ENCODE measurements at regions of chr7 and their contacts with region 1.

Region 1: DNA sequence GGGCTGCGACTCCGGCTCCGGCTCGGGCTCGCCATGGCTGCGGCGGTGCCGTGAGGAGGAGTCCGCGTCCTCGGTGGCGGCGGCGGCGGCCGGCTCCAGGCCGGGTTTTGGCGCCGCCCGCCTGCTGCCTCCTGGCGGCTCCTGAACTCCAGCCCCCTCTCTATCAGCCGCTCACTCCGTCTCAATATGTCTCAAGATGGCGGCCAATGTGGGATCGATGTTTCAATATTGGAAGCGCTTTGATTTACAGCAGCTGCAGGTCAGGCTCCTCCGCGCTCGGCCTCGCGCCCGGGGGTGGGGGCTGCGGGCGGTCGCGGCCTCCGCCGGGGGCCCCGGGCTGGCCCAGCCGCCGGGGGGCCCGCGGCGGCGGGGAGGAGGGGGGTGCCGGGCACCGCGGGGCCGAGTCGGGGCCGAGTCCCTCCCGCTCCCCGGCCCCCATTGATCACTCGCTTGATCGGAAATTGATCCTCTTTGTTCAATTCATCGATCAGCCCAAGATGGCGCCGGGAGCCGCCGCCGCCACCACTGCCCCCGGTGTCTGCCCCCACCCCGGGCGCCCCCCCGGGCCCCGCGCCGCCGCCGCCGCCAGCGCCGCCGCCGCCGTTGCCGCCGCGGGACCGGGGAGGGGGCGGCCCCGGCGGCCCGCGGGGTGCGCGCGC is 1.5 kb upstream of the CUX1 start:
- DNase-seq: peak; percentile 82 to 89 (median 85)
- ATAC-seq: peak; percentile 56
- H3K4me3 ChIP-seq: peak overlapping the region; percentile 68
- H3K27ac ChIP-seq: peak overlapping the region; percentile 76
- H3K4me1 ChIP-seq: peaks cover 27 to 34% of the 10 kb centered on the region in 2 experiments
- H3K27me3 ChIP-seq: no peaks in the 10 kb centered on the region
- CTCF ChIP-seq: peak in 2 of 3 experiments; percentile 31 to 35; a peak in 2 of 6 replicates
- EP300 ChIP-seq: no peak
- POLR2A ChIP-seq: no peak
- RAD21 ChIP-seq: no peak

Region 2: DNA sequence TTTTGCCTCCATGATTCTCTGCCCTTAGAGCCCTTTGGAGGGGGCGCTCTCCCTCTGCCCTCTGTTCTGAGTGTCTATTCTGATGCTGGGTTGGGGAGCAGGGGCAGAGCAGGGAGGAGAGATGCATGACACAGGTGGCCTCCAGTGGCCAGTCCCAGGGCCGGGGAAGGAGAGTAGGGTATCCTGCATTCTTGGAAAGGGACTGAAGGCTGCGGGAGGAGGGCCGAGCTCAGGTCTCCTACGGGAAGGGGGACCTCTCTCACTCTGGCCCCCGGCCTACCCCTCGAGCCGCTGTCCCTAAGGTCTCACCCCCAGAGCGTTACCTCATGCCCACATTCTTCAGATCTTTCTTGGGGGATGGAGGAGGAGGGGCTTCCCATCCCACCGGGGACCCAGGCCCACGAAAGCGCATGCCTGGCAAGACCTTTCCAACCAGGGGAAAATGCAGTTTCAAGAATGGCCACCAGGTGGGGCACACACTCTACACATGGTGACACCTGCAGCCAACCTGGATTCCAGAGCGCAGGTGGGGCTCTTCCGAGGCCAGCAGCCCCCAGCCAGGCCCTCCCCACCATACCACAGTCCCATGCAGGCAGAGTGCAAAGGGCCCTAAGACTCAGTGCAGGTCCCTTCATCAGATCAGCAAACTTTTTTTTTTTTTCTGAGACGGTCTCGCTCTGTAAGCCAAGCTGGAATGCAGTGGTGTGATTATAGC is 273.3 kb before region 1 on chr7:
- CTCF ChIA-PET with region 1: interaction called, 3 read pairs
- POLR2A ChIA-PET with region 1: no interaction called
- in situ Hi-C with region 1: no loop called
- intact Hi-C with region 1: loop called (anchors 5 kb)
- DNase-seq: peak; percentile 68 to 81 (median 76)
- ATAC-seq: peak; percentile 76
- H3K4me3 ChIP-seq: no peak overlapping the region
- H3K27ac ChIP-seq: no peak overlapping the region
- H3K4me1 ChIP-seq: peaks cover 0 to 26% of the 10 kb centered on the region in 2 experiments; a peak in 1 of 5 replicates
- H3K27me3 ChIP-seq: peaks cover 0 to 5% of the 10 kb centered on the region in 2 experiments; a peak in 2 of 5 replicates
- CTCF ChIP-seq: peak; percentile 88 to 93 (median 91)
- EP300 ChIP-seq: no peak
- POLR2A ChIP-seq: no peak
- RAD21 ChIP-seq: peak; percentile 89 to 93

Region 3: DNA sequence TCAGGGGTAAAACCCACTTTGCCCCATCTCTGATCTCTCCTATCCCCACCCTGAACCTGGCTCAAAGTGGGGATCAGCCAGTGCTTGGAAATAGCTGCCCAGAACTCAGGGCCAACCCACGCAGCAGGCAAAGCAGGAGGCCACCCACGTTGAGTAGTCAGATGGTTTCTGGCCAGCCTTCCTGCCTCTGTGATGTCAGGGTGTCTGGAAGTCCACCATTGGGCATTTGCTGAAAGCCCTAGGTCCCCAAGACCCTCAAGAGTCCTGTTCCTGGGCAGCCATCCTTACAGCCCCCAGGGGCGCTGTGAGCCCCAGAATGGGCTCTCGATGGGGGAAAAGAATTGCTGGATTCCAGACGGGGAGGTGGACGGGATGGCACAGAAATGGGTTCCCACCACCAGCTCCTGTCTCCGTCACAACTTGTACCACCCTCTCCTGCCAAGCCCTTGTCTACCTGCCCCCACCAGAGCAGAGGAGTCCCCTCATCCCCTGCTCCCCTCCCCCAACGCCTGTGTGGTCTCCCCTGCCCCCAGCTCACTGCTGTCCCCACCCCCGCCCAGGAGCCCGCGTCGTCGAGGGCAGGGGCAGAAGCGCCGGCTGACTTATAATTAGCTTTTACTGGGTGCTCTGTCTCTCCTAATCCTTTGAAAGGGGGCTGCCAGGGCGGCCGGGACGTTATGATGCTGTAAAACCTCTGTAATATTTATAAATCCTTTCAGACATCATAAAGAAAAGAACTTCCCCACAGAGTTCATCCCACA is 190.8 kb before region 1 on chr7:
- CTCF ChIA-PET with region 1: no interaction called
- POLR2A ChIA-PET with region 1: no interaction called
- in situ Hi-C with region 1: no loop called
- intact Hi-C with region 1: no loop called
- DNase-seq: peak in 1 of 4 experiments; percentile 12
- ATAC-seq: peak; percentile 26
- H3K4me3 ChIP-seq: no peak overlapping the region
- H3K27ac ChIP-seq: no peak overlapping the region
- H3K4me1 ChIP-seq: peaks cover 0 to 11% of the 10 kb centered on the region in 2 experiments; a peak in 1 of 5 replicates
- H3K27me3 ChIP-seq: peaks cover 24 to 64% of the 10 kb centered on the region in 2 experiments
- CTCF ChIP-seq: peak; percentile 25 to 47 (median 26); a peak in 2 of 6 replicates
- EP300 ChIP-seq: no peak
- POLR2A ChIP-seq: no peak
- RAD21 ChIP-seq: peak in 1 of 2 experiments; percentile 8; a peak in 1 of 4 replicates

Region 4: GRCh38 chr7:101677797-101678479 is 138.0 kb before region 1 on chr7:
- CTCF ChIA-PET with region 1: no interaction called
- POLR2A ChIA-PET with region 1: no interaction called
- in situ Hi-C with region 1: no loop called
- intact Hi-C with region 1: no loop called
- DNase-seq: peak in 1 of 4 experiments; percentile 41
- ATAC-seq: peak; percentile 20; the same call in 1 of the 3 replicates
- H3K4me3 ChIP-seq: no peak overlapping the region; the same call in 1 of the 2 replicates
- H3K27ac ChIP-seq: no peak overlapping the region
- H3K4me1 ChIP-seq: peaks cover 0 to 11% of the 10 kb centered on the region in 2 experiments; a peak in 1 of 5 replicates
- H3K27me3 ChIP-seq: peaks cover 0 to 15% of the 10 kb centered on the region in 2 experiments; a peak in 2 of 5 replicates
- CTCF ChIP-seq: no peak
- EP300 ChIP-seq: no peak
- POLR2A ChIP-seq: no peak
- RAD21 ChIP-seq: no peak

Region 5: GRCh38 chr7:101688183-101688831 is 127.7 kb before region 1 on chr7:
- CTCF ChIA-PET with region 1: interaction called, 39 read pairs
- POLR2A ChIA-PET with region 1: no interaction called
- in situ Hi-C with region 1: no loop called
- intact Hi-C with region 1: loop called (anchors 2 kb)
- DNase-seq: peak; percentile 87 to 95 (median 92)
- ATAC-seq: peak; percentile 96
- H3K4me3 ChIP-seq: peak overlapping the region; percentile 36
- H3K27ac ChIP-seq: peak overlapping the region; percentile 76; the same call in 2 of the 3 replicates
- H3K4me1 ChIP-seq: peaks cover 5 to 12% of the 10 kb centered on the region in 2 experiments; a peak in 3 of 5 replicates
- H3K27me3 ChIP-seq: peaks cover 0 to 8% of the 10 kb centered on the region in 2 experiments; a peak in 1 of 5 replicates
- CTCF ChIP-seq: peak; percentile 86 to 95 (median 93)
- EP300 ChIP-seq: no peak
- POLR2A ChIP-seq: no peak
- RAD21 ChIP-seq: peak; percentile 95 to 97

Region 6: GRCh38 chr7:101743241-101743994 is 72.5 kb before region 1 on chr7:
- CTCF ChIA-PET with region 1: interaction called, 5 read pairs
- POLR2A ChIA-PET with region 1: interaction called, 6 read pairs
- in situ Hi-C with region 1: no loop called
- intact Hi-C with region 1: loop called (anchors 5 kb)
- DNase-seq: peak; percentile 78 to 89 (median 84)
- ATAC-seq: peak; percentile 85
- H3K4me3 ChIP-seq: peak overlapping the region; percentile 57
- H3K27ac ChIP-seq: no peak overlapping the region
- H3K4me1 ChIP-seq: peaks cover 7 to 51% of the 10 kb centered on the region in 2 experiments; a peak in 4 of 5 replicates
- H3K27me3 ChIP-seq: peaks cover 2 to 11% of the 10 kb centered on the region in 2 experiments; a peak in 2 of 5 replicates
- CTCF ChIP-seq: peak; percentile 48 to 72 (median 49); a peak in 5 of 6 replicates
- EP300 ChIP-seq: peak; percentile 32; the same call in 1 of the 2 replicates
- POLR2A ChIP-seq: no peak
- RAD21 ChIP-seq: peak; percentile 45 to 51

Region 7: GRCh38 chr7:101856473-101857357 is 40.8 kb after region 1 on chr7:
- CTCF ChIA-PET with region 1: interaction called, 7 read pairs
- POLR2A ChIA-PET with region 1: interaction called, 8 read pairs
- in situ Hi-C with region 1: no loop called
- intact Hi-C with region 1: loop called (anchors 1 kb)
- DNase-seq: peak; percentile 97 to 98 (median 97)
- ATAC-seq: peak; percentile 94
- H3K4me3 ChIP-seq: peak overlapping the region; percentile 34
- H3K27ac ChIP-seq: peak overlapping the region; percentile 98
- H3K4me1 ChIP-seq: peaks cover 47 to 57% of the 10 kb centered on the region in 2 experiments
- H3K27me3 ChIP-seq: no peaks in the 10 kb centered on the region; a peak in 1 of 5 replicates
- CTCF ChIP-seq: peak; percentile 79 to 84 (median 82)
- EP300 ChIP-seq: peak; percentile 68
- POLR2A ChIP-seq: peak; percentile 69
- RAD21 ChIP-seq: peak; percentile 77 to 84

Region 8: GRCh38 chr7:102079140-102080018 is 263.4 kb after region 1 on chr7:
- CTCF ChIA-PET with region 1: no interaction called
- POLR2A ChIA-PET with region 1: no interaction called
- in situ Hi-C with region 1: no loop called
- intact Hi-C with region 1: loop called (anchors 5 kb)
- DNase-seq: peak in 2 of 4 experiments; percentile 25 to 45
- ATAC-seq: peak; percentile 18
- H3K4me3 ChIP-seq: no peak overlapping the region
- H3K27ac ChIP-seq: peak overlapping the region; percentile 96
- H3K4me1 ChIP-seq: peaks cover 29 to 35% of the 10 kb centered on the region in 2 experiments; a peak in 4 of 5 replicates
- H3K27me3 ChIP-seq: no peaks in the 10 kb centered on the region
- CTCF ChIP-seq: no peak
- EP300 ChIP-seq: no peak
- POLR2A ChIP-seq: no peak
- RAD21 ChIP-seq: no peak